Thyroid gland (tissue), 4 donors: ENCODE measurements at regions of chr1 and their contacts with region 1.

Region 1: GRCh38 chr1:180123463-180123936 is 31.2 kb upstream of the QSOX1 start:
- DNase-seq: no peak
- H3K4me3 ChIP-seq: no peak overlapping the region
- H3K27ac ChIP-seq: no peak overlapping the region
- H3K4me1 ChIP-seq: no peaks in the 10 kb centered on the region
- H3K27me3 ChIP-seq: no peaks in the 10 kb centered on the region
- CTCF ChIP-seq: no peak
- POLR2A ChIP-seq: no peak

Region 2: DNA sequence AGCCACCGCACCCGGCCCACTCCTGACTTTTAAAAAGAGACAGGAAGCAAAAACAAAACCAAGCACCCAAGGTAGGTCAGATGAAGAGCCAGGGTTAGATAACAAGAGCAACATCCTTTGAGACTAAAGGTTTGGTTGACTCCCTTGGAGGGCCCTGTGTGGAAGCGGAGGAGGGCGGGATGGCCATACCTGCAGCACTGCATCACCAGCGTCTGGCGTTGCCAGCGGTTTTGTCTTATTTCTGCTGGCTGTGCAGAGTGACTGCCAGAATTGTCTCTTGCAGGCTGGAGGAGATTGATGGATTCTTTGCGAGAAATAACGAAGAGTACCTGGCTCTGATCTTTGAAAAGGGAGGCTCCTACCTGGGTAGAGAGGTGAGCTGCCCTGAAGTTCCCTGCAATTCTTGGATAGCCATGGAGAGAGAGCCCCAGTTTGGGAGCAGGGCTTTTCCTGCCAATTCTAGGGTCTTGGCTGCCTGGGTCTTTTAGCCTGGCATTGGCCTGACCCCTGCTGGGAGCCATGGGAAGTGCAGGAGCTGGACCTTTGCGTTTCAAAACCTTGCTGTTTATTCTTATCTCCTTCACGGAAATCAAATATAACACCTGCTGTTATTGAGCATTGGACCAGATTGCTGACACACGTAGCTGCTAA is 55.1 kb after region 1 on chr1:
- intact Hi-C with region 1: loop called (anchors 10 kb)
- DNase-seq: peak; percentile 51 to 66
- H3K4me3 ChIP-seq: no peak overlapping the region
- H3K27ac ChIP-seq: no peak overlapping the region
- H3K4me1 ChIP-seq: peaks cover 7 to 11% of the 10 kb centered on the region in 2 donors
- H3K27me3 ChIP-seq: no peaks in the 10 kb centered on the region
- CTCF ChIP-seq: peak; percentile 75 to 95 (median 82)
- POLR2A ChIP-seq: no peak

Region 3: DNA sequence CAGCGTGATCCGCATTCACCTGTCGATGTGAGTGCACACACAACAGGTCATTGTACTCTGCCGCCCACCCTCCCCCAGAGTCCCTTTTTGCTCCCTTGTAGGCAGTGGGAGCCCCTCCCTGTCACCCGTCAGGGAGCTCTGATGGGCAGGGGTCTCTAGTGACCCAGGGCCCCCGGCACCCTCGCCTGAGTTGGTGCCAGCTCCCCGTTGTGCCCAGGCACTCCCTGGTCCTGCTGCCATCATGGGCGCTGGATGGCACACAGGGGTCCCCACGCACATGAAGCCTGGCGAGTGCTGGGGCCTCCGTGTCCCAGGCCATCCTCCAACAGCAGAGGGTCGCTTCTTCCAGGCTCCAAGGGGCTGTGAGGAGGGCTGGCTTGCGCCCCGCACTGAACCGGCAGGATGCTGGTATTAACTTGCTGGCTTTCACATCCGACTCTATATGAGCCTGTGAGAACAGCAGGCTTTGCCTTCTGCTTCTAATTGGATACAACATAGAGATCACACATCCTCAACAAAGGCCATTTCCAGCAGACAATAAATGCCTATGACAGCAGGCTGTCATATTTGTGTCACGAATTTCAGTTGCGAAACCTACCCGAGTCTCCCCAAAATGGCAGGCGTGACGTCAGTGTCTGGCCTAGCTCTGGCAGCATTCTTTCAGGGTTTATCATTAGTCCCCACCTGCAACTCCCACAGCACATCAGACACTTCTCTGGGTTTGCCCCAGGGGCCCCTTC is 824.6 kb after region 1 on chr1:
- intact Hi-C with region 1: no loop called
- DNase-seq: no peak
- H3K4me3 ChIP-seq: no peak overlapping the region
- H3K27ac ChIP-seq: no peak overlapping the region
- H3K4me1 ChIP-seq: peaks cover 12 to 20% of the 10 kb centered on the region in 2 donors
- H3K27me3 ChIP-seq: no peaks in the 10 kb centered on the region
- CTCF ChIP-seq: no peak
- POLR2A ChIP-seq: no peak